ENCODE measurements at regions of chr3 and their contacts with region 1.

Region 1: DNA sequence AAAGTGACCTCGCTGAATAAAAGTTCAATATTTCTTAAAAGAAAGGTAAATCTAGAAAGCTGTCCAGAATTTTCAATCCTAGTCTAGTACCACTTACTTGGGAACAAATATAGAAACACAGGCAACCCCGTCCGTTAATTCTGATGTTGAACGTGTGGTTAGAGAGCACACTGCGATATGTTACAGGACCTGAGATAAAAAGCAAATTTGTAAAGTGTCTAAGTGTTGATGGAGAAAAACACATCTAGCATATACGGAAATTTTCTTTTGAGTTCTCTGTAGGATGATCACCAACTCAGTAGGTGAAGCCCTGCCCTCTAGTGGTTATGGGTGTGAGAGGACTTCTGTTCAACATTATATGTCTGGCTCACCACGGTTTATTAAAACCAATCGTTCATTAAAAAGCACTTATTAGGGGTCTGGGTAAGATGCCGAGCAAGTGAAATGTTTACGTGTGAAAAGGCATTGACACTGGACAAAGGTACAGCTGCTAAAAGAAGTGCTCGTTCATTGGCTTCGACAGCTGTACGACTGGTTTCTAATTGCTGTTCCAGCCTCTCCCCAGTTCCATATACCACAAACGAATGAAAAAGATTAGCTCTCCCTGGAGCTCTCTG is 1.0 kb upstream of the ATP2C1 start:
- DNase-seq: peak; percentile 61
- ATAC-seq: peak; percentile 57
- H3K4me3 ChIP-seq: peak overlapping the region; percentile 89 to 91
- H3K27ac ChIP-seq: peak overlapping the region; percentile 73
- H3K4me1 ChIP-seq: peaks cover 3 to 17% of the 10 kb centered on the region in 2 experiments; a peak in 3 of 4 replicates
- H3K27me3 ChIP-seq: no peaks in the 10 kb centered on the region
- CTCF ChIP-seq: peak; percentile 78 to 89 (median 83)
- POLR2A ChIP-seq: no peak
- RAD21 ChIP-seq: peak; percentile 85

Region 2: GRCh38 chr3:130276203-130276803 is 616.6 kb before region 1 on chr3:
- CTCF ChIA-PET with region 1: interaction called, 11 read pairs
- POLR2A ChIA-PET with region 1: no interaction called
- RAD21 ChIA-PET with region 1: no interaction called
- intact Hi-C with region 1: no loop called
- DNase-seq: peak; percentile 23
- ATAC-seq: peak; percentile 94
- H3K4me3 ChIP-seq: no peak overlapping the region
- H3K27ac ChIP-seq: no peak overlapping the region
- H3K4me1 ChIP-seq: no peaks in the 10 kb centered on the region
- H3K27me3 ChIP-seq: peaks cover 39% of the 10 kb centered on the region
- CTCF ChIP-seq: peak; percentile 56 to 95 (median 87); a peak in 5 of 6 replicates
- POLR2A ChIP-seq: no peak
- RAD21 ChIP-seq: peak; percentile 83

Region 3: DNA sequence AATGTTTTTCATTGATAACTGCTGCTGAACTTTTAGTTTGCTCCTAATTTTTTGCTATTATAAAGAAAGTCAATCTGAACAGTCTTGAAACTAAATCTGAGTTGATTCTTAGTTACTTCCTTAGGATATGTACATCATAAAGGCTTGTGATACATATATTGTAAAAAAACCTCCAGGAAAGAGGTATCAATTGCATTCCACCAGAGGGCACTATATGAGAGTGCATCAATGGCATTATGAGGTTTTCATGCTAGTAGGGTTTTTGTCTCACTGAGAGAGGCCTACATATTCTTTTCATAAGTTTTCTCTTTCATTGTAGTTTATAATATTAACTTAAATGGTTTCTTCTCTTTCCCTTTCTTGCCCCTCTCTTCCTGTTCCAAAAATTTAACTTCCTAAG is 193.1 kb before region 1 on chr3:
- CTCF ChIA-PET with region 1: no interaction called
- POLR2A ChIA-PET with region 1: no interaction called
- RAD21 ChIA-PET with region 1: no interaction called
- intact Hi-C with region 1: loop called (anchors 1 kb)
- DNase-seq: peak; percentile 10
- ATAC-seq: peak; percentile 61; the same call in 1 of the 2 replicates
- H3K4me3 ChIP-seq: no peak overlapping the region
- H3K27ac ChIP-seq: no peak overlapping the region
- H3K4me1 ChIP-seq: no peaks in the 10 kb centered on the region
- H3K27me3 ChIP-seq: no peaks in the 10 kb centered on the region
- CTCF ChIP-seq: peak; percentile 37 to 68 (median 61); a peak in 5 of 6 replicates
- POLR2A ChIP-seq: no peak
- RAD21 ChIP-seq: peak; percentile 63

Region 4: DNA sequence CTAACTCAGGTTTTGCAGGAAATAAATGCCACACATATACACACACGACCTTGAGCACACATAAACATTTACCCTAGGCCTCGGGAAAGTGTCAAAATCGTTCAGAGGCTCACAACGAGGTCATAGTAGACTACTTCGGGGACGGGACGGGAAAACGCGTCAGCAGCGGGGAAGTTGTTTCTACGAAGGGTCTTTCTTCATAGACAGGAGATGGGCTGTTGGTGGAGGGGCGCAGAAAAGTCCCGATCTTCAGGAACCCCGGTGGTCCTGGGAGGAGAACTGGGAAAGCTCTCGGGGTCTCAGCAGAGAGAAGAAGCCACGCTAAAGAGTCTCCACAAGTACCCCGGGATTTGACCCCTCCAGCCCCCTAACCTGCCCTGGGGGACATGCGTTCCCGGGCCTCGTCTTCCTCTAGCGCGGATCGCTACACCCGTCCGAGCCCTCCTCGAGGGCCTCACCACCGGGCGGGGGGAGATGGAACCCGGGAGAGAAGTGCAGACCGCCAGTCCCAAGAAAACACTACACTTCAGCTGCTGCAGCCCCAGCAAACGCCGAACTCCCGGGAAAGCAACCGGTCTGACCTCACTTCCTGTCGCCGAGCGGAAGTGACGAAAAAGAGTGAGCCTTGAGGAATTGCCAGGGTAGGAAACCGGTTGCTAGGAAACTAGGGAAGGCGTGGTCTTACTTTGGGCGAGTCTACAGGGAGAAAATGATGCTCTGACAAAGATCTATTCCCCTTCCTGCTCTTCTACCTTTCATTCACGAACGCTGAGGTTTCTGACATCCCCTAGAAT is 146.4 kb before region 1 on chr3 and contains the start of gene PIK3R4:
- CTCF ChIA-PET with region 1: interaction called, 7 read pairs
- POLR2A ChIA-PET with region 1: no interaction called
- RAD21 ChIA-PET with region 1: interaction called in 1 of 2 experiments, 3 read pairs
- intact Hi-C with region 1: loop called (anchors 1 kb)
- DNase-seq: peak; percentile 98
- ATAC-seq: peak; percentile 79
- H3K4me3 ChIP-seq: peak within 1 kb of the TSS; percentile 84 to 88
- H3K27ac ChIP-seq: peak within 1 kb of the TSS; percentile 58
- H3K4me1 ChIP-seq: peaks cover 2 to 14% of the 10 kb centered on the region in 2 experiments; a peak in 2 of 4 replicates
- H3K27me3 ChIP-seq: no peaks in the 10 kb centered on the region
- CTCF ChIP-seq: no peak
- POLR2A ChIP-seq: no peak
- RAD21 ChIP-seq: no peak
- total RNA-seq, gene PIK3R4: 23.5 TPM

Region 5: DNA sequence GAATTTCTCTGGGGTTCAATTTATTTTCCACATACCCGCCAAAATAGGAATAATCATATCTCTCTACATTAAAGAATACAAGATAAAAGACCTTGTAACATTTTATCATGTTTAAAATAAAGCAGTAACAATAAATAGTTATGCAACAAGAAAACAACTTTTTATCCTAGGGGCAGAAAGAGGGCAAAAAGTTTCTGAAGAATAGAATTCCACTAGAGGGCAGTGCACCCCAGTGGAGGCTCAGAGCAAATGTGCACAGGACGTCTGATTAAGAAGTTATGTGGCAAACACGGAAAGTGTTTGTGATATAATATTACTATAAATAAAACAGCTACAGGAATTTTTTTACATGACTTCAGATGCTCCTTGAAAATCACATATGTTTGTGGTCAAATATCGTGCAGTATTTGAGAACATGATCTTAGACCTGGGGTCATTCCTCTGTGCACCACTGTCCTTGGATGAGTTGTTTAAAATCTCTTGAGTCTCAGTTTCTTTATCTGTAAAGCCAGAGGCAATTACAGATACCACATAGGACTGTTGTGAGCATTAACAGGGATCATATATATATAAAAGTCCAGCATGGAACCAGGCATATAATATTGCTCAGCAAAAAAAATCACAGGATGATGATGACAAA is 133.0 kb before region 1 on chr3:
- CTCF ChIA-PET with region 1: interaction called, 28 read pairs
- POLR2A ChIA-PET with region 1: interaction called, 5 read pairs
- RAD21 ChIA-PET with region 1: no interaction called
- intact Hi-C with region 1: loop called (anchors 1 kb)
- DNase-seq: peak; percentile 34
- ATAC-seq: peak; percentile 88
- H3K4me3 ChIP-seq: no peak overlapping the region
- H3K27ac ChIP-seq: no peak overlapping the region
- H3K4me1 ChIP-seq: 0 out of 4 replicates have a peak, but pooled peaks cover 0 to 6% of the 10 kb centered on the region in 2 experiments
- H3K27me3 ChIP-seq: no peaks in the 10 kb centered on the region
- CTCF ChIP-seq: peak; percentile 82 to 86 (median 83)
- POLR2A ChIP-seq: no peak
- RAD21 ChIP-seq: peak; percentile 87

Region 6: DNA sequence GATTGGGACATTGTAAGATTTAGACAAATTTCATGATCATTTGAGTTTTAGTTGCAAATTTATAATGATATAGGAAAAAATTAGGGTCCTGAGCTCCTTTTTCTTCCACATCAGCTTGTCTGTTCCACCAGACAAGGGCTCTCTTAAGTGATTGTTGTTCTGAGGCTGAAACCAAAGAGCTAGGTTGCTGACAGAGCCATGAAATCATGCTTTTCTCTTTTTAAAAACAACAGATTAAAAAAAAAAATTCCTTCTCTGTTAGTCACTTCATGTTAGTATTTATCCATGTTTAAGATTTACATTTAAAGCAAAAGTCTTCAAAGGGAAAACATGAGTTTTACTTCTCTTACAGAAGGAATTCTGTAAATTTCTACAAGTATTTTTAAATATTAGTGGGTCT is 57.8 kb after region 1 on chr3:
- CTCF ChIA-PET with region 1: no interaction called
- POLR2A ChIA-PET with region 1: no interaction called
- RAD21 ChIA-PET with region 1: no interaction called
- intact Hi-C with region 1: no loop called
- DNase-seq: no peak
- ATAC-seq: no peak
- H3K4me3 ChIP-seq: no peak overlapping the region
- H3K27ac ChIP-seq: no peak overlapping the region
- H3K4me1 ChIP-seq: no peaks in the 10 kb centered on the region
- H3K27me3 ChIP-seq: no peaks in the 10 kb centered on the region
- CTCF ChIP-seq: no peak
- POLR2A ChIP-seq: no peak
- RAD21 ChIP-seq: no peak

Measured in HCT116 (cell line).